Esophagus squamous epithelium (tissue), 5 donors: ENCODE measurements at regions of chr16 and their contacts with region 1.

Region 1: GRCh38 chr16:83967806-83968305 is at the start of gene NECAB2:
- DNase-seq: no peak
- H3K4me3 ChIP-seq: peak within 1 kb of the TSS in 2 of 4 donors; percentile 43 to 64
- H3K27ac ChIP-seq: no peak within 1 kb of the TSS
- H3K4me1 ChIP-seq: peaks cover 0 to 13% (median 0%) of the 10 kb centered on the region in 3 donors
- H3K27me3 ChIP-seq: peaks cover 0 to 31% (median 4%) of the 10 kb centered on the region in 4 donors
- CTCF ChIP-seq: peak in 4 of 6 experiments; percentile 31 to 58 (median 40)
- POLR2A ChIP-seq: no peak
- total RNA-seq, gene NECAB2: not detected

Region 2: DNA sequence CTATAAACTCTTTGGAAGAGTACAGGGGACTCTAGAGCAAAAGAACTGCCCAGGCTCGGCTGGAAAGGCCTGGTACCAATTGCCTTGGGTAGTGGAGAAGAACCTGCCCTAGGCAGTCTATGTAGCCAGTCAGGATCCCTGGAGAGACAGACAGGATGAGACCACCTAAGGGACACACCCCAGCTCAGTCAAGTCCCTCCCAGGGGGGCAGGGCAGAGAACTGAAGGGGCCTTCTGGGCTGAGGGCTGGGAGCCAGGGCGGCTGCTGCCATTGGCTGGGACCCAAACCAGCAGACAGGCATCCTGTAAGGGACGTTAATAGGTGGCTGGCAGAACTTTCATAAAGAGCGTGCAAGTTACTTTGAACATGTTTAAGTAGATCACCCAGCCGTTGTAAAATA is 87.5 kb after region 1 on chr16:
- intact Hi-C with region 1: loop called (anchors 5 kb)
- DNase-seq: no peak
- H3K4me3 ChIP-seq: no peak overlapping the region
- H3K27ac ChIP-seq: peak overlapping the region in 1 of 4 donors; percentile 14
- H3K4me1 ChIP-seq: no peaks in the 10 kb centered on the region
- H3K27me3 ChIP-seq: no peaks in the 10 kb centered on the region
- CTCF ChIP-seq: no peak
- POLR2A ChIP-seq: no peak